ENCODE measurements at regions of chr4 and their contacts with region 1.

Region 1: GRCh38 chr4:73434311-73434710 is 1.7 kb upstream of the AFP start:
- DNase-seq: peak; percentile 45
- ATAC-seq: peak; percentile 13; the same call in 2 of the 3 replicates
- H3K4me3 ChIP-seq: no peak overlapping the region; a peak in 1 of 6 replicates
- H3K27ac ChIP-seq: peak overlapping the region; percentile 98
- H3K4me1 ChIP-seq: peaks cover 80% of the 10 kb centered on the region
- H3K27me3 ChIP-seq: no peaks in the 10 kb centered on the region
- CTCF ChIP-seq: peak; percentile 69
- EP300 ChIP-seq: peak in 1 of 2 experiments; percentile 35; a peak in 1 of 4 replicates
- POLR2A ChIP-seq: no peak
- RAD21 ChIP-seq: no peak

Region 2: DNA sequence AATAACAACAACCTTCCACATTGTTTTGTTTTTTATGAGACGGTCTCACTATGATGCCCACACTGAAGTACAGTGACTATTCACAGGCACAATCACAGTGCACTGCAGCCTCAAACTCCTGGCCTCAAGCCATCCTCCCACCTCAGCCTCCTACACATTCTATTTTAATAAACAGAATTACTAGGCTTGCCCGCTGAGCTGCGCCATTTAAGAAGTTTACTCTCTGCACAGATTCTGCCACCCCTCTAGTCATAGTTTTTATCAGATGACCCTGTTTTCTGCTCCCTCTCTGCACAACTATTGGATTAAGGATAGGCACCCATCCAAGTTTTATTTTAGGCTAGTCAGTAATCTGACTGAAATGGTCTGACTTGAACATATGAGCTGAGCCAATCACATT is 353.5 kb before region 1 on chr4:
- CTCF ChIA-PET with region 1: no interaction called
- POLR2A ChIA-PET with region 1: no interaction called
- in situ Hi-C with region 1: no loop called
- intact Hi-C with region 1: no loop called
- DNase-seq: no peak
- ATAC-seq: no peak
- H3K4me3 ChIP-seq: no peak overlapping the region
- H3K27ac ChIP-seq: no peak overlapping the region
- H3K4me1 ChIP-seq: 0 out of 2 replicates have a peak, but pooled peaks cover under 1% of the 10 kb centered on the region
- H3K27me3 ChIP-seq: no peaks in the 10 kb centered on the region
- CTCF ChIP-seq: no peak
- EP300 ChIP-seq: no peak
- POLR2A ChIP-seq: no peak
- RAD21 ChIP-seq: no peak

Region 3: GRCh38 chr4:73308286-73308685 is 126.0 kb before region 1 on chr4:
- CTCF ChIA-PET with region 1: no interaction called
- POLR2A ChIA-PET with region 1: no interaction called
- in situ Hi-C with region 1: no loop called
- intact Hi-C with region 1: no loop called
- DNase-seq: peak; percentile 24
- ATAC-seq: peak; percentile 87
- H3K4me3 ChIP-seq: no peak overlapping the region
- H3K27ac ChIP-seq: no peak overlapping the region
- H3K4me1 ChIP-seq: peaks cover 23% of the 10 kb centered on the region
- H3K27me3 ChIP-seq: no peaks in the 10 kb centered on the region
- CTCF ChIP-seq: peak; percentile 73
- EP300 ChIP-seq: no peak
- POLR2A ChIP-seq: no peak
- RAD21 ChIP-seq: 0 out of 2 replicates have a peak, but pooled peaks have one; percentile 22

Region 4: DNA sequence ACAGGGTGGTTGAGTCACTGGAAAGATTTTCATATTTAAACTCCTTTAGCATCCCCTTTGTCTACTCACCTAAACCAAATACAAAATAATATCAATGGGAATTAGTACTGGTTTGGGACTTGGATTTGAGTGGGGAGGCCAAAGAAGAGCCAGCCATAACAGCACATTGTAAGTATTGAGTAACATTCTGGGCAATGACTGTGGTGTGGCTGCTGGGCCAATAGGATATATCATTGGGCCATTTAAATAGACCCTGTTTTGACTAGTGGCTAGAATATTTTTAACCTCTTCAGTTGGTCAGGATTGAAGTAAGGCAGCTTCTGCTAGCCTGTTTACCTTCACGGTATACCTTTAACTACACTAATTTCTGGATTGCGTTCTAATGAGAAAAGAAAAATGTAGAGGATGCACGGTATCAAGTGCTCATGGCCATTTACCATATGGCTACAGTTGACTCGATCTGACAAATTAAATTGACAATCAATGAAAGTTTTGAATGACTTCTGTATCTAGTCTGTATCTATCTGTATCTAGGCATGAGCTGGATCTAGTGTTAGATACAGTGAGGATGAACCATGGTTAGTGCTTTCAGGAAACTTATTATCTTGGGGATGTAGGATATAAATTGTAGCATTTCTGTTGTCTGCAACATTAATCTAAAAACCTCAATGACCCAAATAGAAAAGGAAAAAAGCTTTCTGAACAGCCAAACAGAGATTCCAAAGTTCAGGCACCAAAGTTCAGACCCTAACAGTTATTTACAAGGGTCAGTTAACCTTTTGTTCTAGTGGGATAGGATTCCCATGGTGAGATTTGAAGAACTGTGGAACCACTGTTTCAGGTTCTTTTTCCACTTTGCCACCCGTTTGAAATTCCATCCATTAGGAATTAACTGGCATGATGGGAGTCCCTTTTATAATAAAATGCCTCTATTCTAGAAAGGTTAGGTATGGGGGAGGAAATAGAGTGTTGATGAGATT is 37.0 kb before region 1 on chr4:
- CTCF ChIA-PET with region 1: no interaction called
- POLR2A ChIA-PET with region 1: interaction called, 34 read pairs
- in situ Hi-C with region 1: no loop called
- intact Hi-C with region 1: loop called (anchors 5 kb)
- DNase-seq: peak; percentile 69
- ATAC-seq: peak; percentile 73
- H3K4me3 ChIP-seq: no peak overlapping the region; a peak in 1 of 6 replicates
- H3K27ac ChIP-seq: peak overlapping the region; percentile 72
- H3K4me1 ChIP-seq: peaks cover 94% of the 10 kb centered on the region
- H3K27me3 ChIP-seq: no peaks in the 10 kb centered on the region
- CTCF ChIP-seq: no peak
- EP300 ChIP-seq: peak in 1 of 2 experiments; percentile 88; a peak in 2 of 4 replicates
- POLR2A ChIP-seq: no peak
- RAD21 ChIP-seq: no peak

Region 5: DNA sequence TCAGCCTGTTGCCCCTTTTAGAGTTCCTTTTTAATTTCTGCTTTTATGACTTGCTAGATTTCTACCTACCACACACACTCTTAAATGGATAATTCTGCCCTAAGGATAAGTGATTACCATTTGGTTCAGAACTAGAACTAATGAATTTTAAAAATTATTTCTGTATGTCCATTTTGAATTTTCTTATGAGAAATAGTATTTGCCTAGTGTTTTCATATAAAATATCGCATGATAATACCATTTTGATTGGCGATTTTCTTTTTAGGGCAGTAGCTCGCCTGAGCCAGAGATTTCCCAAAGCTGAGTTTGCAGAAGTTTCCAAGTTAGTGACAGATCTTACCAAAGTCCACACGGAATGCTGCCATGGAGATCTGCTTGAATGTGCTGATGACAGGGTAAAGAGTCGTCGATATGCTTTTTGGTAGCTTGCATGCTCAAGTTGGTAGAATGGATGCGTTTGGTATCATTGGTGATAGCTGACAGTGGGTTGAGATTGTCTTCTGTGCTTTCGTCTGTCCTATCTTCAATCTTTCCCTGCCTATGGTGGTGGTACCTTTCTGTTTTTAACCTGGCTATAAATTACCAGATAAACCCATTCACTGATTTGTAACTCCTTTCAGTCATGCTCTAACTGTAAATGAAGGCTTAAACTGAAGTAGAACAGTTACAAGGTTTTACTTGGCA is 22.4 kb before region 1 on chr4:
- CTCF ChIA-PET with region 1: no interaction called
- POLR2A ChIA-PET with region 1: interaction called, 24 read pairs
- in situ Hi-C with region 1: no loop called
- intact Hi-C with region 1: no loop called
- DNase-seq: no peak
- ATAC-seq: peak; percentile 28
- H3K4me3 ChIP-seq: peak overlapping the region; percentile 24 to 86 (median 71); a peak in 5 of 6 replicates
- H3K27ac ChIP-seq: peak overlapping the region; percentile 89
- H3K4me1 ChIP-seq: peaks cover 82% of the 10 kb centered on the region
- H3K27me3 ChIP-seq: no peaks in the 10 kb centered on the region
- CTCF ChIP-seq: no peak
- EP300 ChIP-seq: no peak
- POLR2A ChIP-seq: peak; percentile 62 to 74; a peak in 3 of 4 replicates
- RAD21 ChIP-seq: no peak

Region 6: GRCh38 chr4:73423184-73423583 is 11.1 kb before region 1 on chr4:
- CTCF ChIA-PET with region 1: no interaction called
- POLR2A ChIA-PET with region 1: interaction called, 85 read pairs
- in situ Hi-C with region 1: no loop called
- intact Hi-C with region 1: loop called (anchors 1 kb)
- DNase-seq: no peak
- ATAC-seq: peak; percentile 2
- H3K4me3 ChIP-seq: no peak overlapping the region
- H3K27ac ChIP-seq: peak overlapping the region; percentile 14
- H3K4me1 ChIP-seq: peaks cover 31% of the 10 kb centered on the region
- H3K27me3 ChIP-seq: no peaks in the 10 kb centered on the region
- CTCF ChIP-seq: no peak
- EP300 ChIP-seq: no peak
- POLR2A ChIP-seq: no peak
- RAD21 ChIP-seq: no peak

Region 7: DNA sequence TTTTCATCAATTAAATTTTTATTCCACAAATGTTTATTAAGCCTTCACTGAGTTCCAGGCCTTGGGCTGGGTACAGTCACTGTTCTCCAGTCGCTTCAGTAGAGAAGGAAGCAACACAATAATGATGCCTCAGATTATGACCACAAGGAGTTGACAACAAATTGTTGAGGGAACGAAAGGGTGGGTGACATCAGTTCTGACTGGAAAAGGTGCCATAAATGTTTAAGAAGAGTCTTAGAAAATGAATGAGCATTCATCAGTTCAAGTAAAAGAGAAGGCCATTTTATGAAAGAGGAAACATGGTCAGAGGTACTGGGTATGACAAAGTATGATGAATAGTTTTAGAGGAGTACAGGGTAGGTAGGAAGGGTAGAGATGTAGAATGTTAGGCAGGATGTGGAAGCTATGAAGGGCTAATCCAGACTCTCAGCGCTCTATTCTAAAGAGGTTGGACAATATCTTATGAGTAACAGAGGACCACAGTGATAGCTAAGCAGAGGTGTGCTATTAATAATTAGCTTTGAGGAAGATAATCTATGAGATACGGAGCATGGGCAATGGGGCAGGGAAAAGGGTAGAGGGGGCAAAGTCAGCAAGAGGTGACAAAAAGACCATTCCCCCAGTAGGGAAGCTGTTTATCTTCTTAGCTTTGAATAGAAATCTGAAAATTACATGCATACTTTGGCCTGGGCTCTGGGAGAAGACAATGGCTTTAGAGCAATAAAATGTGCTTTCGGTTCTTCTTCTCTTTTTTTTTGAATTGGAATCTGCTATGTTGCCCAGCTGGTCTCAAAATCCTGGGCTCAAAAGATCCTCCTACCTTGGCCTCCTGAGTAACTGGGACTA is 22.1 kb after region 1 on chr4:
- CTCF ChIA-PET with region 1: no interaction called
- POLR2A ChIA-PET with region 1: no interaction called
- in situ Hi-C with region 1: no loop called
- intact Hi-C with region 1: no loop called
- DNase-seq: no peak
- ATAC-seq: peak; percentile 12
- H3K4me3 ChIP-seq: no peak overlapping the region
- H3K27ac ChIP-seq: peak overlapping the region; percentile 34
- H3K4me1 ChIP-seq: peaks cover 19% of the 10 kb centered on the region
- H3K27me3 ChIP-seq: no peaks in the 10 kb centered on the region
- CTCF ChIP-seq: no peak
- EP300 ChIP-seq: no peak
- POLR2A ChIP-seq: peak; percentile 56 to 64
- RAD21 ChIP-seq: no peak